PC-3 (cell line): ENCODE measurements at regions of chr9 and their contacts with region 1.

Region 1: DNA sequence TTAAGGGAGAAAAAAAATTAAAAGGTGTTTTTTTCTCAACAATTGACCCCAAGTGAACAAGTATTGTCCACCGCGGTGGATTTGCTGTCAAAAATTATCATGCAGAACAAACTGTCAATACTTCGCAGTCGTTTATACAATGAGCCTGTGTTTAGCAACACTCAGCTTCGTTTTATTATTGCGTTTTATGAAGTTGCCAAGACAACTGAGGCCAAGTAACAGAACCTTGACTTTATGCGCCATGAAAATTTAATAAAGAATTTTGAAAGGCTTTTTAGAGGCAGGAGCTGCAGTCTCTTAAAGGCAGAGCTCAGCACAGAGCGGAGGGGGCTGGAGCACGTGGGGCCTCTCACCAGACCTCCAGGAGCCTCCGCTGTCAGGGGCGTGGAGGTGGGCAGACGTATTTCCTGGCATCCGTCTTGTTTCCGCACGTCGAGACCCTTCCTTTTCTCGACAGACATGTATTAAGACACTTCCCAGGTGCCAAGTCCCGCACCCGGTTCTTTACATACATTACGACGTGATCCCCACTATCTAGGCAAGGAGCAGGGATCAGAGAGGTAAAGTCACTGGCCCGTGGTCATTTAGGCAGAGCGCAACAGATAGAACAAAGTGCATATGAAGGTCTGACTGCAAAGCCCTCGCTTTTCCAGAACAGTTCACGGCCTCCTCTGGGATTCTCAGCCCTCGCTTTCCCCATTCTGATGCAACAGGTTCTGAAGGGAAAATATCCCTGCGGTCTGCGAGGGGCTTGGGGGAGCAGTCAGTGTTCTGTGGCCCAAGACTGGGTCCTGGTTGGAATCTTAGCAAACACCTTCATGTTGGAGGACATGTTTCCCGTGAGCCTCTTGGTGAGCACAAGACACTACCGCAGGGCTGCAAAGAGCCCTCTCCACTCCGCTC is 164.4 kb downstream of the DAB2IP start:
- DNase-seq: no peak
- ATAC-seq: no peak
- H3K4me3 ChIP-seq: no peak overlapping the region
- H3K27ac ChIP-seq: no peak overlapping the region
- H3K4me1 ChIP-seq: no peaks in the 10 kb centered on the region
- H3K27me3 ChIP-seq: no peaks in the 10 kb centered on the region
- CTCF ChIP-seq: no peak

Region 2: DNA sequence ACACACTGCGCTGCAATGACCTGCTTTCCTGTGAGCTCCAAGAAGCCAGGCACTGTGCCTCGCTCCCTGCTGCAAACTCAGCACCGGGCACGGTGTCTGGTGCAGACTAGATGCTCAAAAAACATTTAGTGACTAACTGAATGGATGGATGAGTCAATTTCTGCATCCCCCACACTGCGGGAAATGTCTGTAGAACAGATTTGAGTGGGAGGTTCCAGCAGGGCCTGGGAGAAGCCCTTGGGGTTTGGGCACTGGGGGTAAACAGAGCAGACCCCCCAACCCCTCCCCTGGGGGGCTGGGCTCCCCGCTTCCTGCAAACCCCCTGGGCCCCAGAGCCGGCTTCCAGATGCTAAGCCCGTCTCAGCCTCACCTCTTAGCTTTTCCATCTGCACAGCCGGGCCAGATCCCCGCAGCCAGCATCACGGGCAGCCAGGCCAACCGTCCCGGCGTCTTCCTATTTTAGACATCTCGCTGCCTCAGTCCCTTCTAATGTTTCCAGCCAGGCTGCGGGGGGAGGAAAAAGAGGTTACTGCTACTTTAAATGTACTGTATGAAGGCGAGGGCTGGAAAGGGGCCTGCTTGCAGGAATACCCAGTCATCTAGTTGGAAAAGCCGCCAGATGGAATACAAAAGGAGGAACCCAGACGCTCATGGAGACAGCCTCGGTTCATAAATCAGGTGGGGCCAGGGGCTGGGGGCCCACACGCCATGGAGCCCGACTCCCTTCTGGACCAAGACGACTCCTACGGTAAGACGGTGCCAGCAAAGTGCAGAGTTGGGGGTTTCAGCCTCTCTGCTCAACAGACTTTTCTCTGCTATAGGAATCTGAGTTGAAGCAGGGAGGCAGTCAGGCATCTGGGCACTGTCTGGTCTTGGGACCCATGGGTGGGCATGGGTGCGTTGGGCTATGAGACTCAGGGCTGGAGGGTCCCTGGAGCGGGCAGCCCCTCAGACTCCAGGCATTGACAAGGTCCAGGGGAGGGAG is 249.0 kb before region 1 on chr9:
- CTCF ChIA-PET with region 1: no interaction called
- POLR2A ChIA-PET with region 1: no interaction called
- intact Hi-C with region 1: no loop called
- DNase-seq: peak; percentile 28
- ATAC-seq: peak; percentile 18; the same call in 1 of the 2 replicates
- H3K4me3 ChIP-seq: no peak overlapping the region
- H3K27ac ChIP-seq: no peak overlapping the region
- H3K4me1 ChIP-seq: peaks cover 25% of the 10 kb centered on the region
- H3K27me3 ChIP-seq: no peaks in the 10 kb centered on the region
- CTCF ChIP-seq: no peak

Region 3: DNA sequence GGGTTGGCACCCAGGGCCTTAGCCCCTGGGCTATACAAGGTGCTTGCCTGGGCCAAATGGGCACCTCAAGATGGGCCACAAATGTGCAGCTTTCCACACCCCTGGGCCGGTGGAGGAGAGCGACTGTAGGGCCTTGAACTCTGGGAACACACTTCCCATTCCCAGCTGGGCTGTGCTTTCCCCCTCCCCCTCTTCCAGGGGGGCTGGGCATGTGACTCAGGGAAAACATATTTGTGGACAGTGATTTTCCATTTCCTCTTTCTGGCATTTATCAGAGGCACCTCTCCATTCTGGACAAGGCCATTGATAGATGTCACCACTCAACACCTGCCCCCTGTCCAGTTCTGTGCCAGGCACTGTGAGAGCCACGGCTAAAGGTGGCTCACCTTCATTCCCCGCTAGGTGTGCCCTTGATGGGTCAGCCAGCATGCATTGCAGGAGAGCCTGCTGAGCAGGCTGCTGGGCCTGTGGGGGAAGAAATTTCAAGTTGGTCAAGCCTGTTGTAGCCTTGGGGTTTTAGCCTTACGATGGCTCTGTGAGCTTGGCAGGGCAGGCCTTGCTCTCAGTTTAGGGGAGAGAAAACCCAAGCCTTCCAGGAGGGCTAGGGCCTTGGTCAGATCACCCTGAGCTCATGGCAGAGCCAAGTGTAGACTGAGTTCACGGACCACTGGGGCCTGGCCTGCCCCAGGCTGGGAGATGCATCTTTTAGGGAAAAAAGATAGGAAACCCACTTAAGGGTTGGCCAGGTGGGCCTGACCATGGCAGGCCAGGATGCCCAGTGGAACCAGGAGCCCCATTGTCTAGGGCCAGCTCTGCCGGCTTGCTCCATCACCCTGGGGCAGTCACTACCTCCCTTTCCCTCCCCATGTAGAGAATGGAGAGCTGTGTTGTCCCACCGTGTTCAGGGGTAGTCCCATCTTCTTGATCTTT is 50.5 kb before region 1 on chr9:
- CTCF ChIA-PET with region 1: no interaction called
- POLR2A ChIA-PET with region 1: no interaction called
- intact Hi-C with region 1: no loop called
- DNase-seq: peak; percentile 63
- ATAC-seq: peak; percentile 76
- H3K4me3 ChIP-seq: no peak overlapping the region
- H3K27ac ChIP-seq: 0 out of 2 replicates have a peak overlapping the region, but pooled peaks have one; percentile 39
- H3K4me1 ChIP-seq: peaks cover 10% of the 10 kb centered on the region
- H3K27me3 ChIP-seq: no peaks in the 10 kb centered on the region
- CTCF ChIP-seq: no peak

Region 4: GRCh38 chr9:121831869-121832268 is 16.1 kb after region 1 on chr9:
- CTCF ChIA-PET with region 1: no interaction called
- POLR2A ChIA-PET with region 1: interaction called, 10 read pairs
- intact Hi-C with region 1: no loop called
- DNase-seq: no peak
- ATAC-seq: no peak
- H3K4me3 ChIP-seq: no peak overlapping the region
- H3K27ac ChIP-seq: no peak overlapping the region
- H3K4me1 ChIP-seq: no peaks in the 10 kb centered on the region
- H3K27me3 ChIP-seq: no peaks in the 10 kb centered on the region
- CTCF ChIP-seq: no peak